Upper lobe of right lung (tissue), 1 donor: ENCODE measurements at regions of chr1 and their contacts with region 1.

Region 1: DNA sequence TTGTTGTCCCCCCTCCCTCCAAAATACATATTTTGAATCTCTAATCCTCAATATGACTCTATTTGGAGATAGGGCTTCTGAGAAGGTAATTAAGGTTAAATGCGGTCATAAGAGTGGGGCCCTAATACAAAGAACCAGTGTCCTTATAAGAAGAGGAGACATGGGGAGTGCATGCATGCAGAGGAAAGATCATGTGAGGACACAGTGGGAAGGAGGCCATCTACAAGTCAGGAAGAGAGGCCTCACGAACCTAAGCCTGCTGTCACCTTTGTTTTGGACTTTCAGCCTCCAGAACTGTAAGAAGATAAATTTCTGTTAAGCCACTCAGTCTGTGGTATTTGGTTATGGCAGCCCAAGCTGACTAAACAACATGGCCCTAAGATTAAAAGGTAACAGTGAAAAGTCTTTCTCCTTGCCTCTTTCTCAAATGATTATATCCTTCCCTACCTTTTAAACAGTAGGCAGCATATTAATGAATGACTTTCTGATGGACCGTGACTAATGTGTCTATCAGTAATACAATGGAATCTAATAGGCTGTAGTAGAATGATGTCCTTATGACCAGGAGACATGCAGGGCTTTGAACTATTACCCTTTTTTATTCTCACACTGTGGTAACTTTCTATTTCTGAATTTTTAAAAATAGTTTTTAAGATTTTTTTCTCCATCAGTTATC is 40.6 kb upstream of the ST6GALNAC3 start:
- DNase-seq: no peak
- ATAC-seq: no peak
- H3K4me3 ChIP-seq: no peak overlapping the region
- H3K27ac ChIP-seq: no peak overlapping the region
- H3K4me1 ChIP-seq: no peaks in the 10 kb centered on the region
- H3K27me3 ChIP-seq: no peaks in the 10 kb centered on the region
- CTCF ChIP-seq: no peak

Region 2: GRCh38 chr1:76105372-76105771 is 71.4 kb after region 1 on chr1:
- intact Hi-C with region 1: loop called (anchors 5 kb)
- DNase-seq: no peak
- ATAC-seq: no peak
- H3K4me3 ChIP-seq: no peak overlapping the region
- H3K27ac ChIP-seq: no peak overlapping the region
- H3K4me1 ChIP-seq: no peaks in the 10 kb centered on the region
- H3K27me3 ChIP-seq: no peaks in the 10 kb centered on the region
- CTCF ChIP-seq: no peak